ENCODE measurements at regions of chr5 and their contacts with region 1.

Region 1: DNA sequence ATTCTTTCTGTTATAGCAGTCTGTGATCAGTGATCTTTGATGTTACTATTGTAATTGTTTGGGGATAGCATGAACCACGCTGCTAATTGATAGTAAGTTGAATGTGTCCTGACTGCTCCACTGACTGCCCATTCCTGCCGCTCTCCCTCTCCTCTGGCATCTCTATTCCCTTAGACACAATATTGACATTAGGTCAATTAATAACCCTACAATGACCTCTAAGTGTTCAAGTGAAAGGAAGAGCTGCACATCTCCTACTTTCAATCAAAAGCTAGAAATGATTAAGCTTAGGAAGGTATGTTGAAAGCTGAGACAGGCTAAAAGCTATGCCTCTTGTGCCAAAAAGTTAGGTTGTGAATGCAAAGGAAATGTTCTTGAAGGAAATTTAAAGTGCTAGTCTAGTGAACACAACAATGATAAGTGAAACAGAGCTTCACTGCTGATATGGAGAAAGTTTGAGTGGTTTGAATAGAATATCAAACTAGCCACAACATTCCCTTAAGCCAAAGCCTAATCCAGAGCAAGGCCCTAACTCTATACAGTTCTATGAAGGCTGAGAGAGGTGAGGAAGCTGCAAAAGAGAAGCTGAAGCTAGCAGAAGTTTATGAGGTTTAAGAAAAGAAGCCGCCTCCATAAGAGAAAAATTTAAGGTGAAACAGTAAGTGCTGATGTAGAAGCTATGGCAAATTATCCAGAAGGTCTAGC is 12.9 kb downstream of the CLINT1 start:
- DNase-seq: no peak
- H3K4me3 ChIP-seq: no peak overlapping the region
- H3K27ac ChIP-seq: no peak overlapping the region
- H3K4me1 ChIP-seq: peaks cover 43% of the 10 kb centered on the region
- CTCF ChIP-seq: no peak

Region 2: DNA sequence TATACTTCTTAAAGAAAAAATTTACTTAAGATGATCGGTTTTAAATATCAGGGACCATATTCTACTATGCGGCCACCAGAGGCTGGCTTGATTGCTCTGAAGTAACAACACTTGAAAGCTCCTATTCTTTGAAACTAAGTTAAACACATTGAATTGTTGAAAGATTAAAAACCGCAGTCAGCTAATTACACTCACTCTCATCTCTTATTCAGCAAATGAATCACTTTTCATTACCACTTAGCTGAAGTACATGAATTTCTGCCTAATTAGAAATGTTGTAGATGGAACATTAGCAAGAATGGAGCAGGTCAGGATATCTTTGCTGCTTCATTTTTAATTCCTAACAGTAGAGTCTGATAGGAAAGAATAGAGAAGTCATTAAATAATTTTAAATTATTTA is 60.2 kb before region 1 on chr5:
- CTCF ChIA-PET with region 1: no interaction called
- POLR2A ChIA-PET with region 1: no interaction called
- intact Hi-C with region 1: no loop called
- DNase-seq: no peak
- H3K4me3 ChIP-seq: no peak overlapping the region
- H3K27ac ChIP-seq: no peak overlapping the region
- H3K4me1 ChIP-seq: no peaks in the 10 kb centered on the region
- CTCF ChIP-seq: no peak

Region 3: DNA sequence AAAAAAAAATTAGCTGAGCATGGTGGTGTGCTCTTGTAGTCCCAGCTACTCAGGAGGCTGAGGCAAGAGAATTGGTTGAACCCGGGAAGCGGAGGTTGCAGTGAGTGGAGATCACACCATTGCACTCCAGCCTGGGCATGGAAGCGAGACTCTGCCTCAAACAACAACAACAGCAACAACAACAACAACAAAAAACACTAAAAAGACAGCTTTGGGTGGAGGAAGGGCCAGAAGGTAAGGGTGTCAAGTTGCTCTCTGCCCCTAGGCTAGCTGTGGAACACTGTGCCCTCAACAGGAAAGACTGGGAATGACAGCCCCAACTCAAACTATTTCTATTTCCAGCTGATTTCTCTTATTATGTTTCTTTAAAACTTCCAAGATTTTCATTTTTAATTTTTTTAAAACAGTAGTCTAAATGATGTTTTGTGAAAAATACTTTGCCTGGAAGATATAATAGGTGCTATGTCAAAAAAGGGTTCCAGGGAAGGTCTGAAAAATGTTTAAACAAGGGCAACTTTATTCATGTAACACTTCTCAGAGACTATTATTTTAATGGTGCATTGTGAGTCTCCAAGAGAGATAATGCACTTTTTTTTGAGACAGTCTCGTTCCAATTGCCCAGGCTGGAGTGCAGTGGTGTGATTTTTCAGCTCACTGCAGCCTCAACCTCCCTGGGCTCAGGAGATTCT is 17.0 kb before region 1 on chr5:
- CTCF ChIA-PET with region 1: no interaction called
- POLR2A ChIA-PET with region 1: interaction called, 57 read pairs
- intact Hi-C with region 1: no loop called
- DNase-seq: no peak
- H3K4me3 ChIP-seq: peak overlapping the region; percentile 47
- H3K27ac ChIP-seq: peak overlapping the region; percentile 96
- H3K4me1 ChIP-seq: peaks cover 99% of the 10 kb centered on the region
- CTCF ChIP-seq: peak; percentile 50

Region 4: GRCh38 chr5:158100373-158100888 is 254.4 kb after region 1 on chr5:
- CTCF ChIA-PET with region 1: no interaction called
- POLR2A ChIA-PET with region 1: no interaction called
- intact Hi-C with region 1: no loop called
- DNase-seq: peak; percentile 12
- H3K4me3 ChIP-seq: no peak overlapping the region
- H3K27ac ChIP-seq: no peak overlapping the region
- H3K4me1 ChIP-seq: no peaks in the 10 kb centered on the region
- CTCF ChIP-seq: no peak

Region 5: DNA sequence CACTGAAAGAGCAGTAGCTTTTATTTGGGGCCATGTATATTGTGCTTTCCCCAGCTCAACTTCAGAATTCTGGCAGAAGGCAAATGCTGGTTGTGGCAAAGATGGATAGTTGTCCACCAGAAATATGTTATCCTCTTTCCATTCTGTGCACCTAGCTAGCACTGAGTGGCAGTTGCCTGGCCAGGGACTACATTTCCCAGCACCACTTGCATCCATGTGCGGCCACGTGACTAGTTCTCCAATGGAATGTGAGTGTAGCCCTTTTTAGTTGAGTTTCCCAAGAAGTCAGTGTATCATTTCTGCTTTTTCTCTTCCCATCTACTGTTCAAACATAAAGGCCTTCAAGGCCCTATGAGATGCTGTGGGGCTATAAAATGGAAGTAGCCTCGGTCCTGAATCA is 366.9 kb after region 1 on chr5:
- CTCF ChIA-PET with region 1: no interaction called
- POLR2A ChIA-PET with region 1: no interaction called
- intact Hi-C with region 1: no loop called
- DNase-seq: no peak
- H3K4me3 ChIP-seq: no peak overlapping the region
- H3K27ac ChIP-seq: no peak overlapping the region
- H3K4me1 ChIP-seq: peaks cover 10% of the 10 kb centered on the region
- CTCF ChIP-seq: no peak

Measured in OCI-LY7 (cell line).